ENCODE measurements at regions of chr21 and their contacts with region 1.

Region 1: DNA sequence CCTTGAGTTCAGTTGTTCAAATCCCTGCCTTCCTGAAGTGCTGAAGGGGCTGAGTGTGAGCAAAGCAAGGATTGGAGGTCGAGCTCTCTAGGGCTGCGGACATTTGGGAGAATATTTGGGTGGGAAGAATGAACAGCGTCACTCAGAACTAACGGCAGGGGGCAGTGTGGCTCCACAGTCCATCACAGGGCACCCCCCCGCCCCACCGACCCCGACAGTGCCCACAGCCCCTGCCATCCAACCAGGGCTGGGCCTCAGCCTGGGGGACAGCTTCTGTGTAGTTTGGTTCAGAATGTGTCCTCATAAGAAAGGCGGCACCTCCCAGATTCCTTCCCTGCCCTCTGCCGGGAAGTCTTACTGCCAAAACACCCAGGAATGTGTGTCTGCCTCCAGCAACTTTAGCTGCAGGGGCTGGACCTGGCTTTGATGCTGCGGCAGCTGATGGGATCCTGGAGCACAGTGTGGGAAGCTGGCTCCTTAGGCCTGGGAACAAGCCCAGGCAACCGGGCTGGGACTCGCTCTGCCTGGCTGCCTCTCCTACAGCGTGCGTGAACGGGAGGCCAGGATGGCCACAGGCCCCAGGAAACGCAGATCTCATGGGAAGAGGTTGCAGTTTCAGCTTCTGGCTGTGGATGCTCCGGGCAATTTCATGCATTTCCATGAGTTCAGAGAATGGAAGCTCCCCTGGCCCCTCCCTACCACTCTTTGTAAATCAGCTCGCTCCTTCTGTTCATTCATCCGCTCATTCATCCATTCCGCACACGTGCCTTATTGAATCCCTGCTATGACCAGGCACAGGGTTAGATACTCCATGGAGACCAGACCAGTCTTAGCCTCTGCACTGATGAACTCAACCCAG is 104.9 kb upstream of the TMPRSS2 start:
- DNase-seq: peak; percentile 93
- H3K4me3 ChIP-seq: no peak overlapping the region
- H3K27ac ChIP-seq: peak overlapping the region; percentile 61
- H3K4me1 ChIP-seq: peaks cover 46% of the 10 kb centered on the region
- H3K27me3 ChIP-seq: no peaks in the 10 kb centered on the region
- CTCF ChIP-seq: peak; percentile 50 to 74

Region 2: GRCh38 chr21:41653954-41654491 is 41.1 kb after region 1 on chr21:
- CTCF ChIA-PET with region 1: interaction called, 3 read pairs
- dilution Hi-C with region 1: no loop called
- in situ Hi-C with region 1: no loop called
- intact Hi-C with region 1: loop called (anchors 2 kb)
- DNase-seq: peak; percentile 60
- H3K4me3 ChIP-seq: no peak overlapping the region
- H3K27ac ChIP-seq: peak overlapping the region; percentile 21
- H3K4me1 ChIP-seq: peaks cover 39% of the 10 kb centered on the region
- H3K27me3 ChIP-seq: no peaks in the 10 kb centered on the region
- CTCF ChIP-seq: no peak

Region 3: DNA sequence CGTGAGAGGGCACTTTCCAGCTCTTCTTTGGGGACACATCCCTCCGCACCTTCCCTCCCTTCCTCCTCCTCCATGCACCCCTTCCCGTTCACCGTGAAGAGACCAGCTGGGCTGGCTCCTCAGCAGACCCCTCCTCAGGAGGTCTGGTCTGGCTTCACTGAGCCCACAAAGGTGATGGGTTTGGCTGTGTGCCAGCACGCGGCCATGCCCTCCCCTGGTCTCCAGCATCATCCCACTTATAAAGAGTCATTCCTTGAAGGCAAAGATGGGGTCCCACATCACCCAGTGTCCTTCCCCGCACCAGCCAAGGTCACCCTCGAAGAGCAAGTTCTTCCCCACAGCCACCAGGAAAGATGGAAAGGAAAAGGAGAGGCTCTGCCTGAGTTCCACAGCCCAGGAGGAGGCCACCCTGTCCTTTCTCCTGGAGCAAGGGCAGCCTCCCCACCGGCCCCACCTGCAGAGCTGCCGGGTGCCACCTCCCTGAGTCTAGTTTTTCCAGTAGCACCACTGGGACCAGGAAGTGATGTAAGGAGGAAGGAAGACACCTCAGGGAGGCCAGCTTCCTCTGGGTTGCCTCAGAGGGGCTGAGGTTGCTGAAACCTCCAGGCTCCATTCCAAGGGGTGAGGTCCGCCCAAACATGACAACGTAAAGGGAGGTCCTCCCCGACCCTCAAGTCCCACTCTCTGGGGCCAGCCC is 121.2 kb after region 1 on chr21:
- CTCF ChIA-PET with region 1: interaction called, 4 read pairs
- dilution Hi-C with region 1: loop called (anchors 5 kb)
- in situ Hi-C with region 1: no loop called
- intact Hi-C with region 1: no loop called
- DNase-seq: no peak
- H3K4me3 ChIP-seq: no peak overlapping the region
- H3K27ac ChIP-seq: no peak overlapping the region
- H3K4me1 ChIP-seq: peaks cover 17% of the 10 kb centered on the region
- H3K27me3 ChIP-seq: no peaks in the 10 kb centered on the region
- CTCF ChIP-seq: no peak

Region 4: DNA sequence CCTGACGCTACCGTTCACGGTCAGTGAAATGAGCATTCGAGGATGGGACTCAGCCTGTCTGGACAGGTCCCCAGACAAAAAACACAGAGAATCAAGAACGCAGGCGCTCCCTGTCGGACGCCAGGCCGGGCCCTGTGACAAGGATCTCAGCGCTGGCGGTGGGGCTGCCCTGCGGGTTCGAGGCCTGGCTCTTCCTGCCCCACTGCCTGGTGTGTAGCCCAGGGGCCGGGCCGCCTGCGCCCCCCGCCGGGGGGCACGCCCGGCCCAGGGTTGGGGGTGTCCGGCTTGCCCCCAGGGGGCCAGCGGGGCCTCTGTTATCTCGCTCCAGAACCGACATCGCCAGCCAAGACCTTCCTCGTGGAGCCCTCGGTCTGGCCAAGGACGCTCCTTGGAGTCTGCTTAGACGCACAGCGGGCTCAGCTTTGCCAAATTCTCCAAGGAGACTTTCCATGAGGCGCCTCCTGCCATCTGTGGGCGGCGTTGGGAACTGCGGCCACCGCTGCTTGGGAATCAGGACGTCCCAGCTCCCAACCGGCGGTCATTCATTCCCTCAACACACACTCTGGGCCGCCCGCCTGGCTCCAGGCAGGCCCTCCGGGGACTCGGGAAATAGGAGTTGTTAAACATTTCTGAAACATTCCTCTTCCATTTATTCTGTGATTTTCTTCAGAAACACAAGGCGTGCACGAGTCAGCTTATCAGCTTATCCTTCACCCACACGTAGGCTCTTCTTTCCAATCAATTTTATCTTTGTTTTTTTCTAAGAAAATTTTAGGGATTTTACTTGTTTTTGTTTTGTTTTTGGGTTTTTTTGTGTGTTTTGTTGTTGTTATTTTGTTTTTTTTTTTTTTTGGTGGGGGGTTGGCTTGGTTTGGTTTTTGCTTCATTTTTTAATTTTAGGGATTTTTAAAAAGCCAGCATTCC is 165.3 kb after region 1 on chr21:
- CTCF ChIA-PET with region 1: interaction called, 43 read pairs
- dilution Hi-C with region 1: no loop called
- in situ Hi-C with region 1: loop called in 1 of 2 experiments (anchors 5 kb)
- intact Hi-C with region 1: loop called (anchors 1 kb)
- DNase-seq: peak; percentile 86
- H3K4me3 ChIP-seq: no peak overlapping the region
- H3K27ac ChIP-seq: peak overlapping the region; percentile 56
- H3K4me1 ChIP-seq: peaks cover 25% of the 10 kb centered on the region
- H3K27me3 ChIP-seq: no peaks in the 10 kb centered on the region
- CTCF ChIP-seq: peak; percentile 94

Region 5: GRCh38 chr21:41926117-41926806 is 313.4 kb after region 1 on chr21:
- CTCF ChIA-PET with region 1: no interaction called
- dilution Hi-C with region 1: loop called (anchors 25 kb)
- in situ Hi-C with region 1: loop called (anchors 10 to 25 kb)
- intact Hi-C with region 1: no loop called
- DNase-seq: peak; percentile 52
- H3K4me3 ChIP-seq: peak overlapping the region; percentile 18 to 50 (median 34)
- H3K27ac ChIP-seq: peak overlapping the region; percentile 75
- H3K4me1 ChIP-seq: peaks cover 70% of the 10 kb centered on the region
- H3K27me3 ChIP-seq: no peaks in the 10 kb centered on the region
- CTCF ChIP-seq: no peak

Region 6: DNA sequence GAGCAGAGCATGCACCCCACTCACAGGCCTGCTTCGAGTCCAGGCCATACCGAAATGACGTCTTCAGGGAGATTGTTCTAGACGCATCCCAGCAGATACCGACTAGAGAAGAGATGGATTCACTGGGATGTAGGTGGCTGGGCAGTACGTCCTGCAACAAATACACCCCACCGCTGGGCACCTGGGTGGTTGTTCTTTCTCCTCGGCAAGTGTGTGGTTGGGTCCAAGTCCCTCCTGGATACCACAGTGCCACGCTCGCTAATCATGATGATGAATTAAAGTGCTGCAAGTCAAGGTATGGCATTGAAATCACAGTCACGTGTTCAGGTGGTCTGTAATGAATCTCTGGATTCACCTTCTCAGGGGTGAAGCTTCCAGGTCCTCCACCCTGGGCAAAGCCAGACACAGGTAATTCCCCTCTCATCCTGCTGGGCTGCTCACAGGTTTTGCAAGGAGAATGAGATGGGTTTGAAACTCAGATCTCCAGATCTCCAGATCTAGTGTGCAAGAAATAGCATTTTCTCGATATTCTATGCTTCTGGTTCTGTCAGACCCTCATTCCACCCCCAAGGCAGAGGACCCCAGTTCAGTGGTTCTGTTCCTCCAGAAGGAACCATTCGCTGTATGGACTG is 836.5 kb after region 1 on chr21:
- CTCF ChIA-PET with region 1: no interaction called
- dilution Hi-C with region 1: no loop called
- in situ Hi-C with region 1: no loop called
- intact Hi-C with region 1: loop called (anchors 5 kb)
- DNase-seq: no peak
- H3K4me3 ChIP-seq: no peak overlapping the region
- H3K27ac ChIP-seq: no peak overlapping the region
- H3K4me1 ChIP-seq: no peaks in the 10 kb centered on the region
- H3K27me3 ChIP-seq: no peaks in the 10 kb centered on the region
- CTCF ChIP-seq: no peak

Measured in mammary epithelial cell (primary cell).